ENCODE measurements at regions of chr3 and their contacts with region 1.

Region 1: DNA sequence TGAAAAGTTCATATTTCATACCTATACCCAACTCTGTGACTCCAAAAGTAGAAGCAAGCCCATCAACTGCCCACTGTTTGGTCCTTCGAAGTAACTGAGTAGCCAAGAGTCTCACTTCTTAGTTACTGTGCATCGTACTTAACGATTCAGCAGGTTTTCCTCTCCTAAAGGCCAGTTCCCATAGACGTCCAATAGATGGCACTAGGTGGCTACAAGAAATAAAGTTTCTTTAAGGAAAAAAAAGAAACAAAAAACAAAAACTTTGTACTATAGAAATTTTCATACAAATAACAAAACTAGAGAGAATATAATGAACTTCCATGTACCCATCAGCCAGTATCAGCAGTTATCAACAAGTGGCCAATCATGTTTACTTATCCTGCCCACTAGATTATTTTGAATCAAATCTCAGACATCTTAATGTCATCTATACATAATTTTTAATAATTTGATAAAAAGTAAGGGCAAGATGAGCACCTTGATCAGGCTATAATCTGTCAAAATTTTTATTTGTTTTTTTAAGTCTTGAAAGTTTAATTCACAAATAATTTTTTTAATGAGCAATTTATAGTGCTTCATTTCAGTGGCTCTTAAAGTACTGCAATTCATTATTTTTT is 63.8 kb upstream of the ACP3 start:
- DNase-seq: peak in 4 of 9 donors; percentile 1 to 18 (median 6)
- ATAC-seq: peak; percentile 64
- H3K4me3 ChIP-seq: no peak overlapping the region
- H3K4me3 Mint-ChIP-seq: no peak overlapping the region
- H3K27ac ChIP-seq: no peak overlapping the region
- H3K27ac Mint-ChIP-seq: no peak overlapping the region
- H3K4me1 ChIP-seq: no peaks in the 10 kb centered on the region
- H3K4me1 Mint-ChIP-seq: peaks cover 0 to 2% (median 0%) of the 10 kb centered on the region in 7 donors
- H3K27me3 ChIP-seq: no peaks in the 10 kb centered on the region
- H3K27me3 Mint-ChIP-seq: peaks cover 5 to 25% (median 8%) of the 10 kb centered on the region in 5 donors

Region 2: GRCh38 chr3:131439084-131439483 is 814.3 kb before region 1 on chr3:
- CTCF ChIA-PET with region 1: no interaction called
- POLR2A ChIA-PET with region 1: no interaction called
- intact Hi-C with region 1: no loop called
- DNase-seq: no peak
- ATAC-seq: no peak
- H3K4me3 ChIP-seq: no peak overlapping the region
- H3K4me3 Mint-ChIP-seq: no peak overlapping the region
- H3K27ac ChIP-seq: no peak overlapping the region
- H3K27ac Mint-ChIP-seq: no peak overlapping the region
- H3K4me1 ChIP-seq: no peaks in the 10 kb centered on the region
- H3K4me1 Mint-ChIP-seq: no peaks in the 10 kb centered on the region
- H3K27me3 ChIP-seq: no peaks in the 10 kb centered on the region
- H3K27me3 Mint-ChIP-seq: peaks cover 0 to 22% (median 0%) of the 10 kb centered on the region in 5 donors

Region 3: GRCh38 chr3:131944676-131945075 is 308.7 kb before region 1 on chr3:
- CTCF ChIA-PET with region 1: no interaction called
- POLR2A ChIA-PET with region 1: no interaction called
- intact Hi-C with region 1: no loop called
- DNase-seq: no peak
- ATAC-seq: no peak
- H3K4me3 ChIP-seq: no peak overlapping the region
- H3K4me3 Mint-ChIP-seq: no peak overlapping the region
- H3K27ac ChIP-seq: no peak overlapping the region
- H3K27ac Mint-ChIP-seq: peak overlapping the region in 2 of 9 donors; percentile 5 to 40
- H3K4me1 ChIP-seq: peaks cover 0 to 14% of the 10 kb centered on the region in 2 donors
- H3K4me1 Mint-ChIP-seq: peaks cover 6 to 50% (median 37%) of the 10 kb centered on the region in 7 donors
- H3K27me3 ChIP-seq: no peaks in the 10 kb centered on the region
- H3K27me3 Mint-ChIP-seq: no peaks in the 10 kb centered on the region

Region 4: GRCh38 chr3:132343018-132343612 is 89.7 kb after region 1 on chr3:
- CTCF ChIA-PET with region 1: interaction called, 3 read pairs
- POLR2A ChIA-PET with region 1: no interaction called
- intact Hi-C with region 1: loop called (anchors 1 kb)
- DNase-seq: peak in 5 of 9 donors; percentile 12 to 29 (median 21)
- ATAC-seq: peak; percentile 50
- H3K4me3 ChIP-seq: no peak overlapping the region
- H3K4me3 Mint-ChIP-seq: peak overlapping the region in 3 of 10 donors; percentile 19 to 32 (median 27)
- H3K27ac ChIP-seq: no peak overlapping the region
- H3K27ac Mint-ChIP-seq: no peak overlapping the region
- H3K4me1 ChIP-seq: no peaks in the 10 kb centered on the region
- H3K4me1 Mint-ChIP-seq: peaks cover 0 to 11% (median 0%) of the 10 kb centered on the region in 7 donors
- H3K27me3 ChIP-seq: no peaks in the 10 kb centered on the region
- H3K27me3 Mint-ChIP-seq: peaks cover 0 to 22% (median 0%) of the 10 kb centered on the region in 5 donors

Region 5: GRCh38 chr3:132378048-132378762 is 124.8 kb after region 1 on chr3:
- CTCF ChIA-PET with region 1: no interaction called
- POLR2A ChIA-PET with region 1: no interaction called
- intact Hi-C with region 1: no loop called
- DNase-seq: no peak
- ATAC-seq: no peak
- H3K4me3 ChIP-seq: no peak overlapping the region
- H3K4me3 Mint-ChIP-seq: no peak overlapping the region
- H3K27ac ChIP-seq: no peak overlapping the region
- H3K27ac Mint-ChIP-seq: no peak overlapping the region
- H3K4me1 ChIP-seq: no peaks in the 10 kb centered on the region
- H3K4me1 Mint-ChIP-seq: no peaks in the 10 kb centered on the region
- H3K27me3 ChIP-seq: no peaks in the 10 kb centered on the region
- H3K27me3 Mint-ChIP-seq: peaks cover 0 to 32% (median 26%) of the 10 kb centered on the region in 5 donors

Region 6: GRCh38 chr3:132399054-132399929 is 145.9 kb after region 1 on chr3:
- CTCF ChIA-PET with region 1: no interaction called
- POLR2A ChIA-PET with region 1: no interaction called
- intact Hi-C with region 1: loop called (anchors 2 kb)
- DNase-seq: peak in 5 of 9 donors; percentile 11 to 36 (median 19)
- ATAC-seq: peak; percentile 65
- H3K4me3 ChIP-seq: no peak overlapping the region
- H3K4me3 Mint-ChIP-seq: no peak overlapping the region
- H3K27ac ChIP-seq: no peak overlapping the region
- H3K27ac Mint-ChIP-seq: no peak overlapping the region
- H3K4me1 ChIP-seq: no peaks in the 10 kb centered on the region
- H3K4me1 Mint-ChIP-seq: no peaks in the 10 kb centered on the region
- H3K27me3 ChIP-seq: no peaks in the 10 kb centered on the region
- H3K27me3 Mint-ChIP-seq: peaks cover 0 to 25% (median 0%) of the 10 kb centered on the region in 5 donors

Region 7: DNA sequence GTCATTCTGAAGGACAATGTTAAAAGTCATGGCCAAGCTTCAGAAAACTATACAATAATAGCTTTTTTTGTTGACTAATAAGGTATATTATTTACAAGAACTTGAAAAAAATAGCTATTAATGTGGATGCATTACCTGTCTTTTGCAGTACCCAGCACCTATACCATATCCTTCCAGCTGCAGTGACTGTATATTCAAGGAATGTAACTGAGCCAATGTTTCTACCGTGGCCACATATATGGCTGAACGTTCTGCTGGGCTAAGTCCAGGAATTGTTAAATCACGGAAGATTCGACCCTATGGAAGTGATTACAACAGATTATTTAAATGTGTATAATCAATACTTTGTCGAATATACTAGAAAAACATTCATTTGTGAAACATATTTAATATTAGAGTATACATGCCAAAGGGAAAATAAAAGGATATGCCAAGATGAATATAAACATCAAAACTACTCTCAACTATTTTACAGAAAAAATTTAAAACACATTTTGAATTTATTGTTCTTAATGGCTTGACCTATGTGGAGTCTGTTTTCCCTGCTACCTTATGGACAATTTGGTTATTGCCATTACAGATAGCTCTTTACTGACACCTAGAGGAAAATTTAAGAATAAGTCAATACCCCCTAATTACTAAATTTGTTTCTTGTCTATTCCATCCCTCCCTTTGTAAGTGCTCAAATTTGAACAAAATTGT is 388.6 kb after region 1 on chr3:
- CTCF ChIA-PET with region 1: no interaction called
- POLR2A ChIA-PET with region 1: no interaction called
- intact Hi-C with region 1: loop called in 1 of 2 experiments (anchors 5 kb)
- DNase-seq: peak in 5 of 9 donors; percentile 17 to 45 (median 36)
- ATAC-seq: peak; percentile 67
- H3K4me3 ChIP-seq: no peak overlapping the region
- H3K4me3 Mint-ChIP-seq: no peak overlapping the region
- H3K27ac ChIP-seq: no peak overlapping the region
- H3K27ac Mint-ChIP-seq: no peak overlapping the region
- H3K4me1 ChIP-seq: no peaks in the 10 kb centered on the region
- H3K4me1 Mint-ChIP-seq: peaks cover 0 to 11% (median 3%) of the 10 kb centered on the region in 7 donors
- H3K27me3 ChIP-seq: no peaks in the 10 kb centered on the region
- H3K27me3 Mint-ChIP-seq: no peaks in the 10 kb centered on the region